Tibial artery (tissue), 4 donors: ENCODE measurements at regions of chr11 and their contacts with region 1.

Region 1: GRCh38 chr11:77127232-77127911 is 674 bp upstream of the MYO7A start:
- DNase-seq: peak in 1 of 2 donors; percentile 43
- H3K4me3 ChIP-seq: peak overlapping the region; percentile 34 to 52
- H3K27ac ChIP-seq: peak overlapping the region in 1 of 2 donors; percentile 5
- H3K4me1 ChIP-seq: peaks cover 0 to 42% (median 36%) of the 10 kb centered on the region in 4 donors
- H3K27me3 ChIP-seq: no peaks in the 10 kb centered on the region
- CTCF ChIP-seq: peak; percentile 99

Region 2: DNA sequence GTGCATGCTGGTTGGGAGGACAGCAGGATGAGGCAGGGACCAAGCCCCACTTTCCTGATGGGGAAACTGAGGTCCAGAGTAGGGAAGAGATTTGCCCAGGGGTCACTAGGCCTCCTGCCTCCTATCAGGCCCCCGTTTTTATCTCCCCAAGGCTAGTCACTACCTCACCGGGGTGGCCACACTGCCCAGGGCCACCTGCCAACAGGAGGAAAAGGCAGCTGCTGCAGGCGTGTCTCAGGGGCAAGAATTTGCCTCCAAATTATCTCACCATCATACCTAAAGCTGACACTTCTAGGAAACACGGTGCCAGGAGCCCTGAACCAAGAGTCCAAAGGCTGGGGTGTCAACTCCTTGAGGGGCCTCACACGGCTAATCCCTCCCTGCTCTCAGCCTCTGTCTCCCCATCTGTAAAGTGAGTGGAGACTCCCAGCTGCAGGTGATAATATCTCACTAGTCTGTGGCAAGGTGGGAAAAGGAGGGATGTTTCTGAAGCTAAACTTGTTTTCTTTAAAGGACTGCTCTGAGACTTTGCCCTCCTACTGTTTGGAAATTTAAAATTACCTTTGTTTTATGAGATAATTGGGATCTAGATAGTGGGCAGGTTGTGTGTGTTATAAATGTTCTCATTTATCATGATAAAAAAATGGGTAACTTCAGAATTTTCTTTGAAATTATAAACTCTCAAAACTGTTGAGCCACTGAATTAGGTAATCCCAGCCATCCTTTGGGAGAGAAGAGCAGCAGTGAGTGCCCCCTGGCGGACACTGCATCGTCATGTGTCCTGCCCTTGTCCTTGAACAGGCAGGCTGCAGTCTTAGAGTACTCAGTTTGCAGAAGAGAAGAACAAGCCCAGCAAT is 60.6 kb after region 1 on chr11:
- intact Hi-C with region 1: loop called (anchors 2 kb)
- DNase-seq: peak; percentile 70 to 83
- H3K4me3 ChIP-seq: no peak overlapping the region
- H3K27ac ChIP-seq: no peak overlapping the region
- H3K4me1 ChIP-seq: no peaks in the 10 kb centered on the region
- H3K27me3 ChIP-seq: peaks cover 0 to 4% of the 10 kb centered on the region in 2 donors
- CTCF ChIP-seq: peak; percentile 86 to 88

Region 3: DNA sequence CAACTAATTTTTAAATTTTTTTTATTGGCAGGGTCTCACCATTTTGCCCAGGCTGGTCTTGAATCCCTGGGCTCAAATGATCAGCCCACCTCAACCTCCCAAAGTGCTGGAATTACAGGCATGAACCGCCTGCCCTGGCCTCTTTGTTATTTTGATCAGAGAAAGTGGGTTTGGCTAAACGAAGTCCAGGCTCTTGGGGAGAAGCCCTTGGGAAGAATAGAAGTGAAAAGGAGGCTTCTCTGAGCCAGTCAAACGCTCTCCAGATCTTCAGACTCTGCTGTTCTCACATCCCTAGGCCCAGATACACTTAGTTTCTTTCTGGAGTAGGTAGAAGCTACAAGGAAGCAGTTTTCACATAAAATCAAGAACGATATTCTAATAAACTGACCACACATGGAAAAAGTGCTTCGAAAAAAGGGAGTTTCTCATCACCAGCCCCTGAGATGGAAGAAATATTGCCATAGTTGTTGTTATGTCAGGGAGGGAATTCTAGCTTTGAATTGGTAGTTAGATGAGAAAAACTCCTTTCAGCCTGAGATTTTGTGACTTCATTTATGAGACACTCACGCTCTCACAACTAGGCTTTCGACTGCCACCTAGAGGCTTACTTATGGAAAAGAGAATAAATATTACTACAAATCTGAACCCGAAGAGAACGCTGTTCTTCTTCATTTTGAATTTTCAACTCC is 420.6 kb after region 1 on chr11:
- intact Hi-C with region 1: loop called (anchors 5 kb)
- DNase-seq: peak in 1 of 2 donors; percentile 30
- H3K4me3 ChIP-seq: no peak overlapping the region
- H3K27ac ChIP-seq: no peak overlapping the region
- H3K4me1 ChIP-seq: peaks cover 0 to 4% (median 0%) of the 10 kb centered on the region in 4 donors
- H3K27me3 ChIP-seq: no peaks in the 10 kb centered on the region
- CTCF ChIP-seq: peak; percentile 57 to 60